GM12878 (cell line): ENCODE measurements at regions of chr5 and their contacts with region 1.

Region 1: DNA sequence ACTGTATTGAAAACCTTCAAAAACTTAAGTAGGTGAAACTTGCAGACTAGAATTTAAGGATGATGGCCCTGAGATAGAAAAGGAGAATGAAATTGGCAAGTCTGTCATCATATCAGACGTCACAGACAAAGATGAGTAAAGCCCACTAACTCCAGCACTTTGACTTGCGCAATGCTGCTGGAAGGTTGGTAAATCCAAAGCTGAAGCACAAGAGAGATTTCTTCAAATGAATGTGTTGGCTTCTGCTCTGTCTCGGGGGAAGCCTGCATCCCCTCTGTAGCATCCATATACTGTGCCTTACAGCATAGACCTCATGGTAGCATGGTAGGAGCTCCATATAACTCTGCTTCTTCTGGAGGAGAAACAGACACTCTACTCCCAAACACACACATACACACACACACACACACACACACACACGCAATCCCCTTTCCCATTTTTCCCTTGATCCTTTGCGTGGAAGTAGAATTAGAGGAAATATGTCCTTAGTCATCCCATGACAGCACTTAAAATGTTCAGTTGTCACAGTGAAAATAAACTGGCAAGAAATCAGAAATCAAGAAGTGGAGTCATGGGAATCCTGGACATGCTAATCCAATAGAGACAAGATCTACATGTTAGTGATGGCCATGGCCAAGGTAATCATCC is 241.5 kb downstream of the NR3C1 start:
- DNase-seq: no peak
- ATAC-seq: no peak
- H3K4me3 ChIP-seq: no peak overlapping the region
- H3K27ac ChIP-seq: no peak overlapping the region
- H3K4me1 ChIP-seq: no peaks in the 10 kb centered on the region; the same call in 1 of the 2 replicates
- H3K27me3 ChIP-seq: no peaks in the 10 kb centered on the region
- CTCF ChIP-seq: no peak
- EP300 ChIP-seq: no peak
- POLR2A ChIP-seq: no peak
- RAD21 ChIP-seq: no peak

Region 2: DNA sequence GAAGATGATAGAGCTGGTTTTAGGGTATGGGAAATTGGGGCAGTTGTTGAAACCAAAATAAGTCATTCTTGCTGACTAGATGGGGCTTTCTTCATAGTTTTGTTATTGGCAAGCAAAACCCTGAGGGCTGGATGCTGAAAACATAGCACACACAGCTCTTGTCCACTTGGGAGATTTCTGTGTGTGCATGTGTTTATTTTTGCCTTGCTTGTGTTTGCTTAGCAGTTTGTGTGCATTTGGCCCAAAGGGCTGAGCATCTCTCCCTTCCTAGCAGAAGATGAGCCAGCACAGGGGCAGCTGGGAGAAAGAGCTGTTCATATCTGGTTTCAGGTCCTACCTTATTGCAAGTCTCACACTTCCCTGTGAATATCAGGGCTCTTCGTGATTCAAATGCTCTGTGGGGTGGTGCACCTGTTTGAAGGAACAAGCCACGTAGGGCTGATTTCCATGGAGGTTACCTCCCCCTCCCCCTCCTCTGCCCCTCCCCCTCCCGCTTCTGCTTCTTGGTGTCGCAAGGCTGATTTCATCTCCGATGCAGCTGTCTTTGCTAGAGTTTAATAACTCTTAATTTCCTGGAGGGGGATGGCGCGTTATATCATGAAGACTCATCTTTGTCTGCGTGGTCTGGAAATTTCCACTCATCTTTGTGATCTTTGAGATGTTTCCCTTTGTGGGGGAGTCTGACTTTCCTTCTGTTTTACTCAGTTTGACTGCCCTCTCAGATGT is 95.3 kb before region 1 on chr5:
- CTCF ChIA-PET with region 1: no interaction called
- POLR2A ChIA-PET with region 1: interaction called, 6 read pairs
- RAD21 ChIA-PET with region 1: no interaction called
- SMC1A ChIA-PET with region 1: interaction called, 10 read pairs
- in situ Hi-C with region 1: no loop called
- intact Hi-C with region 1: no loop called
- DNase-seq: peak; percentile 79
- ATAC-seq: peak; percentile 80
- H3K4me3 ChIP-seq: peak overlapping the region; percentile 4; the same call in 1 of the 2 replicates
- H3K27ac ChIP-seq: peak overlapping the region; percentile 82
- H3K4me1 ChIP-seq: peaks cover 32% of the 10 kb centered on the region
- H3K27me3 ChIP-seq: no peaks in the 10 kb centered on the region
- CTCF ChIP-seq: no peak
- EP300 ChIP-seq: no peak
- POLR2A ChIP-seq: no peak; the same call in 1 of the 2 replicates
- RAD21 ChIP-seq: peak; percentile 9; the same call in 1 of the 2 replicates

Region 3: GRCh38 chr5:143113461-143113860 is 48.6 kb before region 1 on chr5:
- CTCF ChIA-PET with region 1: interaction called, 3 read pairs
- POLR2A ChIA-PET with region 1: interaction called, 4 read pairs
- RAD21 ChIA-PET with region 1: interaction called, 17 read pairs
- SMC1A ChIA-PET with region 1: interaction called, 10 read pairs
- in situ Hi-C with region 1: no loop called
- intact Hi-C with region 1: no loop called
- DNase-seq: no peak
- ATAC-seq: peak; percentile 18
- H3K4me3 ChIP-seq: no peak overlapping the region
- H3K27ac ChIP-seq: peak overlapping the region; percentile 21
- H3K4me1 ChIP-seq: peaks cover 23% of the 10 kb centered on the region
- H3K27me3 ChIP-seq: no peaks in the 10 kb centered on the region
- CTCF ChIP-seq: no peak
- EP300 ChIP-seq: no peak
- POLR2A ChIP-seq: no peak
- RAD21 ChIP-seq: no peak

Region 4: GRCh38 chr5:143124593-143124992 is 37.4 kb before region 1 on chr5:
- CTCF ChIA-PET with region 1: interaction called, 5 read pairs
- POLR2A ChIA-PET with region 1: no interaction called
- RAD21 ChIA-PET with region 1: interaction called, 17 read pairs
- SMC1A ChIA-PET with region 1: interaction called, 49 read pairs
- in situ Hi-C with region 1: no loop called
- intact Hi-C with region 1: no loop called
- DNase-seq: peak; percentile 77
- ATAC-seq: peak; percentile 68
- H3K4me3 ChIP-seq: no peak overlapping the region
- H3K27ac ChIP-seq: no peak overlapping the region; the same call in 1 of the 2 replicates
- H3K4me1 ChIP-seq: peaks cover 8% of the 10 kb centered on the region
- H3K27me3 ChIP-seq: no peaks in the 10 kb centered on the region
- CTCF ChIP-seq: no peak
- EP300 ChIP-seq: no peak
- POLR2A ChIP-seq: no peak
- RAD21 ChIP-seq: no peak

Region 5: DNA sequence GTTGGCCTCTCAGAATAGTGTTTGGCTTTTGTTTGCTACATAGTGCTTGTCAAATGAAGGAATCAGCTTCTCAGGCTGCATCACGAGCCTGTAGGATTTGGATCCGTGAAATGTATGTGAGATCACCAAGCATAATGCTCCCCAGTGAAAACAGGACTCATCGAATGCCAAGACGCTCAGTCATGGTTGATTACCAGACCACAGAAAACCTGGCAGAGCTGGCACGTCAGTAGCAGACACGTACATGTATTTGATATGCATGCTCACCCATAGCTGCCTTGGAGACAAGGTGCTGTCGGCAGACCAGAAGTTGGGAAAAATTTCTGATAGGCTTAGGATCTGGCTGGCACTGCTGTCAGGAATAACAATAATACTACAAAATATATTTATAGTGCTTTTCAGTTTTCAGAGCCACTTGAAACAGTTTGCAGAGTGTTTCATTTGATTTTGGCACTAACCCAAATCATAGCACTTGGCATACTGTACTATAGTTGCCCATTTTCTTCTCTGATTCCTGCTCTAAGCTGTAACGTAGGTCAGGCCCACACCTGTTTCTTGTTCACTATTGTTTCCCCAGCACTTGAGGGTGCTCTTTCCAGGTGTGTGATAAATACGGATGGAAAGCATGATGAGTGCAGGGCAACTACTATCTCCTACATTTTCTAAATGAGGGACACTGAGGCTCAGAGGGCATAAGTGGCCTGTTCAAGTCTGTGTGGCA is 15.4 kb after region 1 on chr5:
- CTCF ChIA-PET with region 1: interaction called, 5 read pairs
- POLR2A ChIA-PET with region 1: interaction called, 3 read pairs
- RAD21 ChIA-PET with region 1: interaction called, 44 read pairs
- SMC1A ChIA-PET with region 1: interaction called, 50 read pairs
- in situ Hi-C with region 1: no loop called
- intact Hi-C with region 1: no loop called
- DNase-seq: no peak
- ATAC-seq: no peak
- H3K4me3 ChIP-seq: no peak overlapping the region
- H3K27ac ChIP-seq: no peak overlapping the region
- H3K4me1 ChIP-seq: peaks cover 8% of the 10 kb centered on the region
- H3K27me3 ChIP-seq: no peaks in the 10 kb centered on the region
- CTCF ChIP-seq: no peak
- EP300 ChIP-seq: no peak
- POLR2A ChIP-seq: no peak
- RAD21 ChIP-seq: no peak